Vagina (tissue), 2 donors: ENCODE measurements at regions of chr1 and their contacts with region 1.

Region 1: DNA sequence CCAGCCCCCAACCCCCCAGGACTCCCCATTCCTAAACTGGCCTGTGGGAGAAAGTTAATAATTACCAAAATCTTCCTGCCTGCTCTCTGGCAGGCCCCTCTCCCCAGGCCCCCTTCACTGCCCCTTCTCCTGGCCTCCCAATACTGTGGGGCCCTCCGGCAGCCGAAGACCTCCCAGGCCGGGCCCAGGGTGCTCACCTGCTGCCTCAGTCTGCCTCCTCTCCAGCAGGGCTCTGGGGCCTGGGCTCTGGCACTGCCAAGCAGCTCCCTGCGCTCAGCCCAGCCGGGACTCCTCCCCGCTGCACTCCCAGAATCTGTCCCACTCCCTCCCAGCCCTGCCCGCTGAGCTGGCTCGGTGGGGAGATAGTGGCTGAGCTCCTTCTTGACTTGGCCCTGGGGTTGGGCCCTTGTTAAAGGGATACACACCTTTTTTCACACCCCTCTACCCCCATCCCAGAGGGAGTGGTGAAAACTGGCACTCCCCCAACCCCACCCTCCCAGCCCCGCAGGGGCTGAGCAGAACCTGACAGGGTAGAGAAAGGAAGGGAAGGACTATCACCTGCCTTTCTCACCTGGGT is at the start of gene S100A16:
- DNase-seq: no peak
- H3K4me3 ChIP-seq: peak within 1 kb of the TSS; percentile 52 to 68
- H3K27ac ChIP-seq: peak within 1 kb of the TSS; percentile 96
- H3K4me1 ChIP-seq: peaks cover 77% of the 10 kb centered on the region
- H3K27me3 ChIP-seq: no peaks in the 10 kb centered on the region
- CTCF ChIP-seq: no peak
- POLR2A ChIP-seq: peak in 1 of 2 donors; percentile 67
- total RNA-seq, gene S100A16: 259 TPM

Region 2: GRCh38 chr1:153510984-153511410 is 101.8 kb before region 1 on chr1:
- intact Hi-C with region 1: loop called (anchors 5 kb)
- DNase-seq: no peak
- H3K4me3 ChIP-seq: no peak overlapping the region
- H3K27ac ChIP-seq: peak overlapping the region; percentile 61
- H3K4me1 ChIP-seq: peaks cover 29% of the 10 kb centered on the region
- H3K27me3 ChIP-seq: no peaks in the 10 kb centered on the region
- CTCF ChIP-seq: peak; percentile 77 to 93 (median 91)
- POLR2A ChIP-seq: no peak

Region 3: GRCh38 chr1:153545067-153546055 is 67.5 kb before region 1 on chr1 and contains the start of gene S100A4:
- intact Hi-C with region 1: no loop called
- DNase-seq: peak; percentile 98 to 99
- H3K4me3 ChIP-seq: peak within 1 kb of the TSS; percentile 56 to 61
- H3K27ac ChIP-seq: peak within 1 kb of the TSS; percentile 99
- H3K4me1 ChIP-seq: peaks cover 97% of the 10 kb centered on the region
- H3K27me3 ChIP-seq: no peaks in the 10 kb centered on the region
- CTCF ChIP-seq: no peak
- POLR2A ChIP-seq: peak in 1 of 2 donors; percentile 72
- total RNA-seq, gene S100A4: 375 TPM